Caco-2 (cell line): ENCODE measurements at regions of chr2 and their contacts with region 1.

Region 1: GRCh38 chr2:191869178-191869577 is 22.3 kb upstream of the CAVIN2 start:
- DNase-seq: peak in 1 of 2 experiments; percentile 26
- H3K4me3 ChIP-seq: no peak overlapping the region
- H3K4me3 Mint-ChIP-seq: no peak overlapping the region
- H3K27ac Mint-ChIP-seq: no peak overlapping the region
- H3K4me1 ChIP-seq: peaks cover 21% of the 10 kb centered on the region
- H3K4me1 Mint-ChIP-seq: peaks cover 18% of the 10 kb centered on the region
- H3K27me3 ChIP-seq: no peaks in the 10 kb centered on the region
- H3K27me3 Mint-ChIP-seq: no peaks in the 10 kb centered on the region
- CTCF ChIP-seq: peak; percentile 15 to 22

Region 2: DNA sequence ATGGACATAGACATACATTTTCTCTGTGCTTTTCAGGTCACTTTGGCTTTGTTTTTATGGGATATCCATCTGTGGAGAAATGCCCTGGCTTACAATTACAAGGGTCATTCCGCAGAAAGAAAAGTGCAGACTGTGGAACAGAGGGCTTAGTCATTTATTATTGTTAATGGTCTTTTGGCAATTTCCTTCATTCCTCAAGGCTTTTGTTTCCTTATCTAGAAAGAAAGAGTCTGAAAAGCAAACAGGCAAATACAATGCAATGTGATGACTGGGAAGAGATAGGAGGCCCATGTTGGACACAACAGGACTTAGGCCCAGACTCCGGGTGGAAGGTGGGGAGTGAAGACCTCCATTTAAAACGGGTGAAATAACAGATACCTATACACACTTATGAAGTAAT is 107.3 kb after region 1 on chr2:
- CTCF ChIA-PET with region 1: no interaction called
- POLR2A ChIA-PET with region 1: no interaction called
- intact Hi-C with region 1: loop called (anchors 5 kb)
- DNase-seq: peak in 1 of 2 experiments; percentile 9
- H3K4me3 ChIP-seq: no peak overlapping the region
- H3K4me3 Mint-ChIP-seq: no peak overlapping the region
- H3K27ac Mint-ChIP-seq: no peak overlapping the region
- H3K4me1 ChIP-seq: peaks cover 8% of the 10 kb centered on the region; the same call in 1 of the 2 replicates
- H3K4me1 Mint-ChIP-seq: peaks cover 6% of the 10 kb centered on the region
- H3K27me3 ChIP-seq: no peaks in the 10 kb centered on the region
- H3K27me3 Mint-ChIP-seq: no peaks in the 10 kb centered on the region
- CTCF ChIP-seq: no peak

Region 3: DNA sequence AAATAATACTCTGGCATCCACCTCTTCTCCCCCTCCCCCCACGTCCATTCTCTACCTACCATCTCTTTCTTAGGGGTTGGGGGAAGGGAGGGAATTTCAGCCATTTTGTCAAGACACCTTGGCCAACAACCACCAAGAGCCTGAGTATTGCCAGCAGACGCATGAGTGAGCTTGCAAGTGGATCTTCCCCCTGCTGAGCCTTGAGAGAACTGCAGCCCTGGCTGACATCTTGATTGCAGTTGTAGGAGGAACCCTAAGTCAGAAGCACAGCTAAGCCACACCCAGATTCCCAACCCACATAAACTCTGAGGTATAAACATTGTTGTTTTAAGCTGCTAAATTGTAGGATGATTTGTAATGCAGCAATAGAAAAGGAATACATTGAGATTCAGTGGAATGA is 159.9 kb after region 1 on chr2:
- CTCF ChIA-PET with region 1: no interaction called
- POLR2A ChIA-PET with region 1: no interaction called
- intact Hi-C with region 1: loop called (anchors 5 kb)
- DNase-seq: peak; percentile 56 to 58
- H3K4me3 ChIP-seq: no peak overlapping the region
- H3K4me3 Mint-ChIP-seq: no peak overlapping the region
- H3K27ac Mint-ChIP-seq: no peak overlapping the region
- H3K4me1 ChIP-seq: no peaks in the 10 kb centered on the region
- H3K4me1 Mint-ChIP-seq: no peaks in the 10 kb centered on the region
- H3K27me3 ChIP-seq: no peaks in the 10 kb centered on the region
- H3K27me3 Mint-ChIP-seq: peaks cover 4% of the 10 kb centered on the region
- CTCF ChIP-seq: peak; percentile 38 to 42